ENCODE measurements at regions of chr15 and their contacts with region 1.

Region 1: DNA sequence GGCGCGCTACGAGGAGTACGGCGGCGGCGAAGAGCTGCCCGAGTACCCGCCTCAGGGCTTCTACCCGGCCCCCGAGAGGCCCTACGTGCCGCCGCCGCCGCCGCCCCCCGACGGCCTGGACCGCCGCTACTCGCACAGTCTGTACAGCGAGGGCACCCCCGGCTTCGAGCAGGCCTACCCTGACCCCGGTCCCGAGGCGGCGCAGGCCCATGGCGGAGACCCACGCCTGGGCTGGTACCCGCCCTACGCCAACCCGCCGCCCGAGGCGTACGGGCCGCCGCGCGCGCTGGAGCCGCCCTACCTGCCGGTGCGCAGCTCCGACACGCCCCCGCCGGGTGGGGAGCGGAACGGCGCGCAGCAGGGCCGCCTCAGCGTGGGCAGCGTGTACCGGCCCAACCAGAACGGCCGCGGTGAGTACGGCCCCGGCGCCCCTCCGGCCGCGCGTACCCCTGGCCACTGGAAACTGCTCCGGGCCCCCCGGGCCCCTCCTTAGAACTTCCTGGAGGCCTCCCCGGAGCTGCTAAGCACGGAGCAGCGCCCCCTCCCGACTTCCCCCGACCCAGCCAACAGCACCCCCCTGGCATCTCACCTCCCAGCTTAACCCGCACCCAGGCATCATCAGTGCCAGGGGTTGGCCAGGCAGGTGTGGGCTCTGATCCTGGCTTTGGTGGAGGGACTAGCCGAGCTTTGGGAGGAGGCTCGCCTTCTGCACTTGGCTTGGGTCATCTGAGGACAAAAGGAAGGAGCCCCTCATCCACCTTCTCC is 1.4 kb downstream of the LOXL1 start:
- DNase-seq: peak; percentile 82
- H3K4me3 Mint-ChIP-seq: peak overlapping the region; percentile 72
- H3K27ac Mint-ChIP-seq: peak overlapping the region; percentile 85
- H3K4me1 Mint-ChIP-seq: peaks cover 72% of the 10 kb centered on the region
- H3K27me3 Mint-ChIP-seq: no peaks in the 10 kb centered on the region

Region 2: GRCh38 chr15:73897441-73898261 is 30.0 kb before region 1 on chr15:
- CTCF ChIA-PET with region 1: interaction called, 11 read pairs
- POLR2A ChIA-PET with region 1: interaction called, 3 read pairs
- DNase-seq: peak; percentile 84
- H3K4me3 Mint-ChIP-seq: no peak overlapping the region
- H3K27ac Mint-ChIP-seq: no peak overlapping the region
- H3K4me1 Mint-ChIP-seq: peaks cover 13% of the 10 kb centered on the region
- H3K27me3 Mint-ChIP-seq: peaks cover 10% of the 10 kb centered on the region

Region 3: GRCh38 chr15:73914145-73914544 is 13.5 kb before region 1 on chr15:
- CTCF ChIA-PET with region 1: interaction called, 29 read pairs
- POLR2A ChIA-PET with region 1: interaction called, 20 read pairs
- DNase-seq: peak; percentile 51
- H3K4me3 Mint-ChIP-seq: no peak overlapping the region
- H3K27ac Mint-ChIP-seq: peak overlapping the region; percentile 81
- H3K4me1 Mint-ChIP-seq: peaks cover 55% of the 10 kb centered on the region
- H3K27me3 Mint-ChIP-seq: no peaks in the 10 kb centered on the region

Region 4: GRCh38 chr15:73950831-73951561 is 23.3 kb after region 1 on chr15:
- CTCF ChIA-PET with region 1: interaction called, 12 read pairs
- POLR2A ChIA-PET with region 1: interaction called, 4 read pairs
- DNase-seq: peak; percentile 79
- H3K4me3 Mint-ChIP-seq: no peak overlapping the region
- H3K27ac Mint-ChIP-seq: no peak overlapping the region
- H3K4me1 Mint-ChIP-seq: peaks cover 16% of the 10 kb centered on the region
- H3K27me3 Mint-ChIP-seq: no peaks in the 10 kb centered on the region

Region 5: GRCh38 chr15:73972984-73973682 is 45.5 kb after region 1 on chr15:
- CTCF ChIA-PET with region 1: interaction called, 11 read pairs
- POLR2A ChIA-PET with region 1: interaction called, 3 read pairs
- DNase-seq: peak; percentile 86
- H3K4me3 Mint-ChIP-seq: peak overlapping the region; percentile 30
- H3K27ac Mint-ChIP-seq: no peak overlapping the region
- H3K4me1 Mint-ChIP-seq: peaks cover 36% of the 10 kb centered on the region
- H3K27me3 Mint-ChIP-seq: peaks cover 30% of the 10 kb centered on the region

Region 6: DNA sequence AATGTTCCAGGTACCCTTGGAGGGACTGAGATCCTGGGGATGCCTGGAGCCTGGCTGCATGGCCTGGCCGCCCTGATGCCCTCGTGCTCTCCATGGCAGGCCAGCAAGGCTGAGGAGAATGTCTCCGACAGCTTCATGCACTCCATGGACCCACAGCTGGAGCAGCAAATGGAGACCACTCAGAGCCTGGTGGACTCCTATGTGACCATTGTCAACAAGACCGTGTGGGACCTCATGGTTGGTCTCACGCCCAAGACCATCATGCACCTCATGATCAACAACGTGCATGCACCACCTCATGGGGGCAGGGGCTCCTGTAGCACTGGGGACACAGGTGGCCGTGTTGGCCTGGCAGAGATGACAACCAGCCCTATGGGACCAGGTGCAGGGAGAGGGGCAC is 135.0 kb after region 1 on chr15:
- CTCF ChIA-PET with region 1: no interaction called
- POLR2A ChIA-PET with region 1: no interaction called
- DNase-seq: peak; percentile 13
- H3K4me3 Mint-ChIP-seq: no peak overlapping the region
- H3K27ac Mint-ChIP-seq: no peak overlapping the region
- H3K4me1 Mint-ChIP-seq: peaks cover 17% of the 10 kb centered on the region
- H3K27me3 Mint-ChIP-seq: peaks cover 2% of the 10 kb centered on the region

Measured in activated CD4-positive, alpha-beta memory T cell treated with anti-CD3 and anti-CD28 coated beads, Interleukin-2, amount 10 ng/mL, durations not matched to agents 7 days and 5 days (primary cell).